IMR-90 (cell line): ENCODE measurements at regions of chr2 and their contacts with region 1.

Region 1: GRCh38 chr2:237421542-237422116 is 7.7 kb upstream of the COL6A3 start:
- DNase-seq: peak; percentile 90
- ATAC-seq: peak; percentile 85
- H3K4me3 ChIP-seq: peak overlapping the region; percentile 7; the same call in 1 of the 2 replicates
- H3K27ac ChIP-seq: peak overlapping the region; percentile 36
- H3K4me1 ChIP-seq: peaks cover 13% of the 10 kb centered on the region
- H3K27me3 ChIP-seq: no peaks in the 10 kb centered on the region
- CTCF ChIP-seq: peak; percentile 89
- POLR2A ChIP-seq: peak; percentile 59
- RAD21 ChIP-seq: peak; percentile 80

Region 2: DNA sequence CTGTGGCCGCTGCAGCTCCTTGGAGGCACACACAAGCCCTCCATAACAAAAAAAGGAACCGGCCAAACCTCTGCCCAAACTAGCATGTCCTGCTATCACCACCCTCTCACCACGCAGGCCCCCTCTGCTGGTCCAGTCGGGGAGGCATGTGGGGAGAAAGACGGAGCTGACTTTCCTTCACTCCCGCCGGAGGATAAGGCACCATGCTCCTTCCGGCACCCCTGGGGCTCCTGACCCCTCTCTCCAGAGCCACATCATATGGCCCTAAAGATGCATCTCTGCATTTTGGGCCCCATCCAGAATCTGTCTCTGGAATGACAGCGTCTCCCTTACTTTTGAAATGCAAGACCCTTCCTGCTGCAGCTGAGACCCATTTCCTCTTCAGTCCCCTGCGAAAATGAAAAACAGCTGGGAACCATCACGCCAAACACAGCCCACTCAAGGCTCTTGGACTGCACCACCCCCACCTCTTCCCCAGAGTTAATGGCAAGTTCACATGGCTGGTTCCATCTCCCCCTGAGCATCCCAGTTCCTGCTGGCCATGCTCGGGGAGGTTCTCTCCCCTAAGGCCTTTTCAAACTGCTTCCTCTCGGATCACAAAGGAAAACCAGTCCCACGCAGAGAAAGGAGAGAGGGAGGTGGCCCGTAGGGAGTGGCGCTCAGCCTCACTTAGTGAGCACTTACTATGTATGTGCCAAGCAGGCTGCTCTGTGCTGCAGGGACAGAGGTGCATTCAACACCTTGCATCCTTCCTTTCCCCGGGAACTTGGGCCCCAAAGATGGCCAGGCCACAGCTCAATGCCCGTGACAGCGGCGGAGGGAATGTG is 30.2 kb after region 1 on chr2:
- CTCF ChIA-PET with region 1: interaction called, 17 read pairs
- POLR2A ChIA-PET with region 1: no interaction called
- dilution Hi-C with region 1: no loop called
- in situ Hi-C with region 1: no loop called
- intact Hi-C with region 1: loop called (anchors 2 kb)
- DNase-seq: peak; percentile 57
- ATAC-seq: peak; percentile 48
- H3K4me3 ChIP-seq: no peak overlapping the region
- H3K27ac ChIP-seq: peak overlapping the region; percentile 52
- H3K4me1 ChIP-seq: peaks cover 37% of the 10 kb centered on the region
- H3K27me3 ChIP-seq: no peaks in the 10 kb centered on the region
- CTCF ChIP-seq: peak; percentile 53
- POLR2A ChIP-seq: no peak
- RAD21 ChIP-seq: peak; percentile 59